Prostate gland (tissue), 2 donors: ENCODE measurements at regions of chr15 and their contacts with region 1.

Region 1: DNA sequence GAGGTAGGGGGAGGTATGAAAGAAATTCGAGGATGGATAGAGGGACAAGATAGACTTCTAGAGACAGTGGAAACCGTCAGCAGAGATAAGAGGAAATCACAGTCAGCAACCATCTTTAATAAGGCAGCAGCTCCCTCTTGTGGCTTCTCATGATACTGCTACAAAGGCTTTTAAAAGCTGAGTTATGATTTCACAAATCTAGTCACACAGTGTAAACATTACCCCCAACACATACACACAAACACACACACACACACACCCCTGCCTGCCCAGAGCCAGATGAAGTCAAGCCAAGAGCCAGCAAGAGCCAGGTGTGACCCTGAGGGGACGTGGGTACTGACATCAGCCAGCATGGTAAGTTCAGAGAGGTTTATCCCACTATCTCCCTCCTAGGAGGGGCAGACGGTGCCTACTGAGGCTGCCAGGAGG is 18.9 kb upstream of the TGM5 start:
- DNase-seq: peak; percentile 56
- H3K4me3 ChIP-seq: no peak overlapping the region
- H3K27ac ChIP-seq: no peak overlapping the region
- H3K4me1 ChIP-seq: no peaks in the 10 kb centered on the region
- H3K27me3 ChIP-seq: no peaks in the 10 kb centered on the region
- CTCF ChIP-seq: peak; percentile 66 to 91 (median 85)
- POLR2A ChIP-seq: no peak

Region 2: GRCh38 chr15:43008150-43008549 is 277.5 kb before region 1 on chr15:
- intact Hi-C with region 1: no loop called
- DNase-seq: no peak
- H3K4me3 ChIP-seq: no peak overlapping the region
- H3K27ac ChIP-seq: no peak overlapping the region
- H3K4me1 ChIP-seq: no peaks in the 10 kb centered on the region
- H3K27me3 ChIP-seq: no peaks in the 10 kb centered on the region
- CTCF ChIP-seq: no peak
- POLR2A ChIP-seq: no peak

Region 3: DNA sequence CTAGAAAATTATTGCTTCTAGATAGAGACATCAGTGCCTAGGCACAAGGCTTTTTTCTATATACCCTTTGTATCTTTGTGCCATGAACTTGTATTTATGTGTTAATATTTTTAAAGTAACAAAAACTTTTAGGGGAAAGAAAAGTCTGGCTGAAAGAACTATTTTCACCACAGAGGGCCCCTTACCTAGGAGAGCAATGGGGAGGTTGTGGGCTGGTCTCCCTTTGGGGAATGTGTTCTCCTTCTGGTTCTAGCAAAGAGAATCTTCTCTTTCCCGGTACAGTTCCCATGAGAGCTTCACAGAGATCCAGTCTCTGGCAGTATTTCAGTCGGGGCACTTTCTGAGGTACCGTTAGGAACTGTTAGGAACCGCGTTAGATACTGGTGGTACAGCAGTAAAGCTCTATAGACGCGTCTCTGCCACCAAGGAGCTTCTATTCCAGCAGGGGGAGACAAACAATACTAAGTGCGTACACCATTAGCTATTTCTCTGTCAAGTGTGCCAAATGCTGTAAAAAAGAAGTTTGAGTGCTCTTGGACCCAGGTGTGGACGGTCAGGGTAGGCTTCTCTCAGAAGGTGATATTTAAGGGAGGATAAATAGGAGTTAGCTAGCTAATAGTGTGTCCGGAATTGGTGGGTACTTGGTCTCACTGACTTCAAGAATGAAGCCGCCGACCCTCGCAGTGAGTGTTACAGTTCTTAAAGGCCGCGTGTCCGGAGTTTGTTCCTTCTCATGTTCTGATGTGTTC is 60.2 kb before region 1 on chr15:
- intact Hi-C with region 1: loop called (anchors 1 kb)
- DNase-seq: peak; percentile 69
- H3K4me3 ChIP-seq: no peak overlapping the region
- H3K27ac ChIP-seq: no peak overlapping the region
- H3K4me1 ChIP-seq: no peaks in the 10 kb centered on the region
- H3K27me3 ChIP-seq: no peaks in the 10 kb centered on the region
- CTCF ChIP-seq: peak; percentile 19 to 85 (median 81)
- POLR2A ChIP-seq: no peak